ENCODE measurements at regions of chr2 and their contacts with region 1.

Region 1: GRCh38 chr2:61949714-61950560 is 44.5 kb downstream of the COMMD1 start:
- DNase-seq: no peak
- ATAC-seq: no peak
- H3K4me3 ChIP-seq: no peak overlapping the region
- H3K27ac ChIP-seq: no peak overlapping the region
- H3K4me1 ChIP-seq: no peaks in the 10 kb centered on the region
- H3K27me3 ChIP-seq: no peaks in the 10 kb centered on the region
- CTCF ChIP-seq: no peak

Region 2: GRCh38 chr2:60634438-60634837 is 1315.5 kb before region 1 on chr2:
- CTCF ChIA-PET with region 1: no interaction called
- POLR2A ChIA-PET with region 1: interaction called, 17 read pairs
- intact Hi-C with region 1: no loop called
- DNase-seq: no peak
- ATAC-seq: no peak
- H3K4me3 ChIP-seq: no peak overlapping the region
- H3K27ac ChIP-seq: no peak overlapping the region
- H3K4me1 ChIP-seq: no peaks in the 10 kb centered on the region
- H3K27me3 ChIP-seq: peaks cover 99% of the 10 kb centered on the region
- CTCF ChIP-seq: no peak

Region 3: DNA sequence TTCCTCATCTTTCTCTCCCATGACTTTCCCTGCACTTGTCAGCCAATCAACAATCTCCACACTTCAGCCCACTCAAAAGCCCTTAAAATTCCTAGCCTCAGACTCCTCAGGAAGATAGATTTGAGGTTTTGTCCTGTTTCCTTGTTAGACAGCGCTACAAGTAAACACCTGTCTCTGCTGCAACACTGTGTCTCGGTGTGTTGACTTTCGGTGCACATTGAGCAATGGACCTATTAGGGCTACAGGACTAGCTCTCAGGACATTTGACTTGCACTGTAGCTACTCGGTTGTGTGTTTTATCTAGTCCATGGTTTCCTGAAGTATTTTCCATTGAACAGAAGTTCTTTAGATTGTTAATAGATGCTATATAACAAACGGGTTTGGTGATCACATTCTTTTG is 270.8 kb before region 1 on chr2:
- CTCF ChIA-PET with region 1: no interaction called
- POLR2A ChIA-PET with region 1: no interaction called
- intact Hi-C with region 1: no loop called
- DNase-seq: no peak
- ATAC-seq: no peak
- H3K4me3 ChIP-seq: no peak overlapping the region
- H3K27ac ChIP-seq: no peak overlapping the region
- H3K4me1 ChIP-seq: no peaks in the 10 kb centered on the region
- H3K27me3 ChIP-seq: no peaks in the 10 kb centered on the region
- CTCF ChIP-seq: no peak

Region 4: DNA sequence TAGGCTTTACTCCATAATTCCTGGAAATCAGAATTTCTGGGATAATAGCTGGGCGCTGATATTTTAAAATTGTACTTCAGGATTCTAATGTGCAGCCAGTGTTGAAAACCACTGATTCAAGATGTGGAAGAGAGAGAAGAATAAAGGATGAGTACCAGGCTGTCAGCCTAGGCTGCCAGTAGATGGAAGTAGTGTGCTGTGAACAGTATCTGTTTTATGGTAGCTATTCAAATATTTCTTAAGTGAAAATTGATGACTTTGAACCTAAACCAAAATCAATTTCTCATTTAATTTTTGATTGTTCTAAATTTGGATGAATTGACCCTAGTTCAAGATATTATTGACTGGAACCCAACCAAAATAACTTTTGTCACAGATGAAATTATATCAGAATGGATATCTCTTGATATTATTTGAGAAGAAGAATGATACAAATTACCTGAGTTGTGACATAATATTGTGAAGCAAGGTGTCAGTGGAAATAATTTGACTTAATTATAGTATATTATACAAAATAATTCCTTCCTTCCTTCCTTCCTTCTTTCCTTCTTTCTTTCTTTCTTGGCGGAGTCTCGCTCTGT is 43.6 kb after region 1 on chr2:
- CTCF ChIA-PET with region 1: no interaction called
- POLR2A ChIA-PET with region 1: no interaction called
- intact Hi-C with region 1: no loop called
- DNase-seq: peak; percentile 68
- ATAC-seq: peak; percentile 80
- H3K4me3 ChIP-seq: no peak overlapping the region
- H3K27ac ChIP-seq: no peak overlapping the region
- H3K4me1 ChIP-seq: no peaks in the 10 kb centered on the region
- H3K27me3 ChIP-seq: no peaks in the 10 kb centered on the region
- CTCF ChIP-seq: peak; percentile 89